ENCODE measurements at regions of chr10 and their contacts with region 1.

Region 1: DNA sequence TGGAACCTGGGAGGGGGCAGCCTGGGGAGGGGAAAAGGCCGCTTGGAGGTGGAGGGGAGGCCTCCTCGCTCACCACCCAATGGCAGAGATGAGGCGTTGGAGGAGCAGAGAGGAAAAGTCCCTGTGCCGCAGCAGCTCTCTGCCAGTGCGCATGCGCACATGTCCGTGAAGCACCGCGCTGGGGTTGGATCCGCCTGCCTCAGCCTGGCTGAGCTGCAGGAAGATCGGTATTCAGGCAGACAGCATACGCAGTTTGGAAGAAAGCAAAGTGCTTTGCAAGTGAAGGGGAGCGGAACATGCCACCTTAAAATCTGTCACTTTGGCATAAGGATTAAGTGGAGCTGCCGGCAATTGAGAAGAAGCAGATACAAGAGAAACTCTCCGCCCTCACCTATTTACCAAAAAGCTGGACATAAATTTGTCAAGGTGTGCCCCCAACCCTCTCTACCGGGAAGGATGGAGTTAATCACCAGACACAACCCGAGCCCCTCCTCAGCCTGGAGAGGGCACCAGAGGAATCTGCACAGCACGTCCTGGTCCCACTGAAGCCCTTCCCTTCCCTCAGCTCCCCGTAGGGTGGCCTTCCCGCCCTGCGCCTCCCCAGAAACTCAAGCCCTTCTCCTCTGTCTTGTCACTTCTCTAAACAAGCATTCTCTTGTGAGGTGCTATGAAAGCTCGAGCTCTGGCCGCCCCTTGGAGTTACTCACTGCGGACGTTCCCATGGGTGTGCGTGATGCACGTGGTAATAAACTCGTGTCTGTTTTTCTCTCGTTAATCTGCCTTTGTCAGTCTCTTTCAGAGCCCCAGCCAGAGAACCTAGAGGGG is 32.2 kb upstream of the TMEM72 start:
- DNase-seq: no peak
- ATAC-seq: peak; percentile 95
- H3K4me3 ChIP-seq: peak overlapping the region; percentile 42 to 55
- H3K27ac ChIP-seq: peak overlapping the region; percentile 51; the same call in 1 of the 2 replicates
- H3K4me1 ChIP-seq: peaks cover 9% of the 10 kb centered on the region
- H3K27me3 ChIP-seq: peaks cover 6% of the 10 kb centered on the region; the same call in 1 of the 2 replicates
- CTCF ChIP-seq: no peak

Region 2: GRCh38 chr10:43174969-43175368 is 1703.9 kb before region 1 on chr10:
- CTCF ChIA-PET with region 1: no interaction called
- POLR2A ChIA-PET with region 1: no interaction called
- in situ Hi-C with region 1: no loop called
- intact Hi-C with region 1: no loop called
- DNase-seq: no peak
- ATAC-seq: no peak
- H3K4me3 ChIP-seq: no peak overlapping the region
- H3K27ac ChIP-seq: no peak overlapping the region
- H3K4me1 ChIP-seq: no peaks in the 10 kb centered on the region
- H3K27me3 ChIP-seq: no peaks in the 10 kb centered on the region
- CTCF ChIP-seq: no peak

Region 3: GRCh38 chr10:43502931-43503330 is 1376.0 kb before region 1 on chr10:
- CTCF ChIA-PET with region 1: no interaction called
- POLR2A ChIA-PET with region 1: interaction called, 10 read pairs
- in situ Hi-C with region 1: no loop called
- intact Hi-C with region 1: no loop called
- DNase-seq: no peak
- ATAC-seq: no peak
- H3K4me3 ChIP-seq: no peak overlapping the region
- H3K27ac ChIP-seq: no peak overlapping the region
- H3K4me1 ChIP-seq: no peaks in the 10 kb centered on the region
- H3K27me3 ChIP-seq: no peaks in the 10 kb centered on the region
- CTCF ChIP-seq: no peak

Region 4: GRCh38 chr10:44843484-44843883 is 35.4 kb before region 1 on chr10:
- CTCF ChIA-PET with region 1: no interaction called
- POLR2A ChIA-PET with region 1: no interaction called
- in situ Hi-C with region 1: no loop called
- intact Hi-C with region 1: no loop called
- DNase-seq: no peak
- ATAC-seq: no peak
- H3K4me3 ChIP-seq: no peak overlapping the region
- H3K27ac ChIP-seq: no peak overlapping the region
- H3K4me1 ChIP-seq: no peaks in the 10 kb centered on the region
- H3K27me3 ChIP-seq: peaks cover 5% of the 10 kb centered on the region; the same call in 1 of the 2 replicates
- CTCF ChIP-seq: no peak

Measured in Panc1 (cell line).